Activated CD4-positive, alpha-beta memory T cell treated with anti-CD3 and anti-CD28 coated beads, Interleukin-2, amount 10 ng/mL, durations not matched to agents 7 days and 5 days (primary cell): ENCODE measurements at regions of chr22 and their contacts with region 1.

Region 1: GRCh38 chr22:30386960-30387827 is at the start of gene RNF215:
- DNase-seq: peak; percentile 82
- H3K4me3 Mint-ChIP-seq: peak within 1 kb of the TSS; percentile 77
- H3K27ac Mint-ChIP-seq: peak within 1 kb of the TSS; percentile 52
- H3K4me1 Mint-ChIP-seq: peaks cover 36% of the 10 kb centered on the region
- H3K27me3 Mint-ChIP-seq: peaks cover 2% of the 10 kb centered on the region
- total RNA-seq, gene RNF215: 12.2 to 13.3 TPM

Region 2: DNA sequence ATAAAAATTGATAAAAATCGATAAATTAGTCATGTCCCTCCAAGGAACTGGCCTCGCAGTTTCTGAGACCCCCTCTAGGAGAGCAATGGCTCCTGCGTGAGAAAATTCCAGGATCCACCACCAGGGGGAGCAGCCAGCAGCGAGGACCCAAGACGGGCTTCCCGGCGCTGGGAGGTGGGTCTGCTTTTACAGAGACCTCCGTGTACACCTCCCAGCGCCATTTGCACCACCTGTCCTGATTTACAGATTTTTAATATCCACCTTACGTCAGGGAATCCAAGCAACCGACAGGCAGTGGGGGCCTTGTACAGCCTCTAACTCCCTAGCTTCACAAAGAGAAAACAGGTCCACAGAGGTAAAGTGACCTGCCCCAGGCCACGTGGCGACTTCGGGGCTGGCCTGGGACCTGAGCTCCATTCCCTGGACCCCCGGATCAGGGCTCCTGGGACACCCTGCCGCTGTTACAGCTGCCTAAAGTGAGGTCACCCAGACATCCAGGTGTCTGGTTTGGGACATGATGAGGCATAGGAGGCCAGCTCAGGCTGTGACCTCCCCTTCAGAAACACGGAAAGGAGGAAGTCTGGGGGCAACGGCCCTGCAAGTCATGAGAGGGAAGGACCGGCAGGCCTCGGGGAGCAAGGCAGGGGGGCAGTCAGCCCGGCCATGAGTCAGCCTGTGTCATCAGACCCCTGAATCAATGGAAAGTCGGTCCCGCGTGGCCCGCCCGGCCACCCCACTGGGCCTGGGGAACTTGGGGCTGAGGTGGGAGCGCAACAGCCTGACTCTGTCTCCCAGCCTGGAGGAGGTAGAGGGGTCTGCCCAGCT is 124.1 kb before region 1 on chr22:
- CTCF ChIA-PET with region 1: interaction called, 13 read pairs
- POLR2A ChIA-PET with region 1: interaction called, 5 read pairs
- DNase-seq: peak; percentile 81
- H3K4me3 Mint-ChIP-seq: peak overlapping the region; percentile 99
- H3K27ac Mint-ChIP-seq: peak overlapping the region; percentile 80
- H3K4me1 Mint-ChIP-seq: peaks cover 62% of the 10 kb centered on the region
- H3K27me3 Mint-ChIP-seq: no peaks in the 10 kb centered on the region

Region 3: DNA sequence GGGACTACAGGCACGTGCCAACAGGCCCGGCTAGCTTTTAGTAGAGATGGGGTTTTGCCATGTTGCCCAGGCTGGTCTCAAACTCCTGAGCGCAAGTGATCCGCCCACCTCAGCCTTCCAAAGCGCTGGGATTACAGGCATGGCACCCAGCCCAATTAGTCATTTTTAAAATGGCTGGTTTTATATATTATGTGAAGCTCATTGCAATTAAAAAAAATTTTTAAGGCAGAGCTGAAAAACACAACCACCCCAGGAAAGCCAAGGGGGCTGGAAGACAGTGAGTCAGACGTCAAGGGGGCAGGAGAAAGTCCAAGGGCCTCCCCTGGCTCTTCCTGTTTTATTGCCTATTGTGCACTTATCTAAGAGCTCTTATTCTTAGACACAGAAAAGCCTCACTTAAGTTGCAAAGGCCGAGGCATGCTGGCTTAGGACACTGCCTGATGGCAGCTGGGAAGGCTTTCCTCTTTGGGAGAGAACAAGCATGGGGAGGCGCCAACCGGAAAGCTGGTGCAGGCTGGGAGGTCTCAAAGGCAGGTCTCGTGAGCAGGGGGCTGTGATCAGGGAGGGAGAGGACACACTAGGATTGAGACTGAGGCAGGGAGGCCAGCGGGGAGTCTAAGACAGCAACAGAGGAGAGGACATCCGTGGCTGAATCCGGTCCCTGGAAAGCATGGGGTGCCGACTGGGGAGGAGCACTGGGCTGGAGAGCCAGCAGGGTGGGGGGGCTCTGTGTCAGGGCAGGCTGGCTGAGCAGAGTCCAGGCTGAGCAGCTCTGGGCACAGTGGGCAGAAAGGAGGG is 109.4 kb before region 1 on chr22:
- CTCF ChIA-PET with region 1: interaction called, 20 read pairs
- POLR2A ChIA-PET with region 1: no interaction called
- DNase-seq: no peak
- H3K4me3 Mint-ChIP-seq: no peak overlapping the region
- H3K27ac Mint-ChIP-seq: no peak overlapping the region
- H3K4me1 Mint-ChIP-seq: peaks cover 78% of the 10 kb centered on the region
- H3K27me3 Mint-ChIP-seq: no peaks in the 10 kb centered on the region

Region 4: DNA sequence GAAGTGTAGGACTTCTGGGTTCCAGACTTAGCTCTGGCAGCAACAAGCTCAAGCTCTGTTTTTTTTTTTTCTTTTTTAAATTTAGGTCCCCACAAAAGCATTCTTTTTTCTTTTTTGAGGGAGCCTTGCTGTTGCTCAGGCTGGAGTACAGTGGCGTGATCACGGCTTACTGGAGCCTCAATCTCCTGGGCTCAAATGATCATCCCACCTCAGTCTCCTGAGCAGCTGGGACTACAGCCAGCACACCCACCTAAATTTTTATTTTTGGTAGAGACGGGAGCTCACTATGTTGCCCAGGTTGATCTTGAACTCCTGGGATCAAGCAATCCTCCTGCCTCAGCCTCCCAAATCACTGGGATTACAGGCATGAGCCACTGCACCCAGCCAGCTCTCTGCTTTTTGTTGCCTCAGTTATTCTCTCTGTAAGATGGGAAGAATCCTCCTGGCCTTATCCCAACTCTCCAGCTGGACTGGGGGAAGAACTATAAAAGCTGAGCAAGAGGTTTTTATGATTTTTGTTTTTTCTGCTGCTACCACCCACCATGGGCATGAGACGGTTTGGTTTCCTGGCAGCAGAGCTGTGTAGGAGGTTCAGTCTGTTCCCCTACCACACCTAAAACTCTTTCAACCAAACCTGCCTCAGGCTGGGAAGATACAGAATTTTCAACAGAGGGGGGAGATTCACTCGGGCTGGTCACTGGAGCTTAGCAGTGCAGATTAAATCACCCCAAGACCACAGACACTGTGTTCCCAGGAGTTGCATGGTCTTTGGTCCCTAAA is 26.7 kb after region 1 on chr22:
- CTCF ChIA-PET with region 1: interaction called, 11 read pairs
- POLR2A ChIA-PET with region 1: no interaction called
- DNase-seq: no peak
- H3K4me3 Mint-ChIP-seq: no peak overlapping the region
- H3K27ac Mint-ChIP-seq: no peak overlapping the region
- H3K4me1 Mint-ChIP-seq: peaks cover 14% of the 10 kb centered on the region
- H3K27me3 Mint-ChIP-seq: no peaks in the 10 kb centered on the region

Region 5: DNA sequence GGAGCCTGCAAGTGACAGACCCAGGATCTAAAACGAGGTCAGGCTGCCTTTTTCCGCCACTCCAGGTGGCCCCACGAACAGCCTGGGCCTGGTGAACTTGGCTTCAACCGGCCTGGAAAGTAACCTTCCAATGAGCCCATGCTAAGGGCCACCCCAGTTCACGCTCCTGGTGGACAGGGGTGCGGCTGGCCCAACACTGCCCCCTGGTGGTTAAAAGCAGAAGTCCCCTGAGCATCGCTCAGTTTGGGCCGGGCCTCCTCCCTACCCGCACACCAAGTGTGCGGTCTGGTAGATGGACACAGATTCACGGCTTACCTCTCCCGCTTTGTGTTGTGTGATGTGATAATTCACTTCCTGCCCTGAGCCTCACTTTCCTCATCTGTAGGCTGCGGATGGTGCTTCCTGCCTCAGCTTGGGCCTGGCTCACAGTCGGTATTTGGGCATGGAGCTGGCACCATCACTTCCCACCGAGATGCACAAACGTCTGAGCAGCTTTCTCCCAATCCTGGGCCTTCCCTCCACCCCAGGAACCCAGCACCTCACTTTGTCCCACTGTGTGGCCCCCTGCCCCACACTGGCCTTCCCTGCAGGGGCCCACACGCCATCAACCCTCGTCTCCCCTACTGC is 98.3 kb after region 1 on chr22:
- CTCF ChIA-PET with region 1: interaction called, 12 read pairs
- POLR2A ChIA-PET with region 1: interaction called, 3 read pairs
- DNase-seq: peak; percentile 81
- H3K4me3 Mint-ChIP-seq: no peak overlapping the region
- H3K27ac Mint-ChIP-seq: no peak overlapping the region
- H3K4me1 Mint-ChIP-seq: no peaks in the 10 kb centered on the region
- H3K27me3 Mint-ChIP-seq: peaks cover 14% of the 10 kb centered on the region

Region 6: DNA sequence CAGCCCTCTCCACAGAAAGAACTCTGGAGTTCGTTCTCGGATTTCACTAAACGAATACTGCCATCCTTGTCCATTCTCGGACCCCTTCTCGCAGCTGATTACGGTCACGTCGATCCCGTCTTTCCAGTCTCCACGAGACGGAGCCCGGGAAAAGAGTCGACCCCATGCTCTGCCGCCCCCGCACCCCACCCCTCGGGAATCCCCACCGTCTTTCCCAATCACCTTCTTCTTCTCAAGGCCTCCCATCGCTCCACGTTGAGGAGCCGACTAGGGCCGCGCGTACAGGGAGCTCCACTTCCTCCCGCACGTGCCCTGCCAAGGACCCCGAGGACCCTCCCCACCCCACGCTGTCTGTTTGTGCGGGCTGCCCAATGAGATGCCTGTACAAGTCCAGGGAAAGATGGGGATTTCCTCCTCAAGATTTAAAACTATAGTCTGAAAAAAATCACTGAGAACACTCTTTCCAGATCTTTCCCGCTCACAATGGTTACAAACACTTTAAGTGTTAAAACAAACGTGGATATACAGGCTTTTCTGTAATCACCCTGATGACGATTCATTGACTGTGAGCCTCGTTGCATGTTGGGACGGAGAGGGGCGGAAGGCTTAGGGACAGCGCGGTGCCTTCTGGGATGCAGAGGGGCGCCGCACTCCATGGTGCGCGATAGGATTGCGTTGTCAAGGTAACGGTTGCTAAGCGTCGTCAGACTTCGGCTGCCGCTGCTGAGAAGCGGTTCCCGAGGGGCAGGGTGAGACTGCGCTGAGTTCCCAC is 204.6 kb after region 1 on chr22 and contains the start of gene PES1:
- CTCF ChIA-PET with region 1: no interaction called
- POLR2A ChIA-PET with region 1: no interaction called
- DNase-seq: peak; percentile 95
- H3K4me3 Mint-ChIP-seq: no peak within 1 kb of the TSS
- H3K27ac Mint-ChIP-seq: no peak within 1 kb of the TSS
- H3K4me1 Mint-ChIP-seq: peaks cover 1% of the 10 kb centered on the region
- H3K27me3 Mint-ChIP-seq: peaks cover 10% of the 10 kb centered on the region
- total RNA-seq, gene PES1: 48.3 to 54.9 TPM